ENCODE measurements at regions of chr2 and their contacts with region 1.

Region 1: GRCh38 chr2:26139269-26140183 is 33.4 kb upstream of the GAREM2 start:
- DNase-seq: peak in 1 of 2 experiments; percentile 44
- ATAC-seq: peak; percentile 28 to 42
- H3K4me3 ChIP-seq: no peak overlapping the region
- H3K27ac ChIP-seq: no peak overlapping the region; a peak in 1 of 6 replicates
- H3K4me1 ChIP-seq: peaks cover 14% of the 10 kb centered on the region
- CTCF ChIP-seq: no peak
- EP300 ChIP-seq: no peak
- POLR2A ChIP-seq: no peak
- RAD21 ChIP-seq: no peak

Region 2: DNA sequence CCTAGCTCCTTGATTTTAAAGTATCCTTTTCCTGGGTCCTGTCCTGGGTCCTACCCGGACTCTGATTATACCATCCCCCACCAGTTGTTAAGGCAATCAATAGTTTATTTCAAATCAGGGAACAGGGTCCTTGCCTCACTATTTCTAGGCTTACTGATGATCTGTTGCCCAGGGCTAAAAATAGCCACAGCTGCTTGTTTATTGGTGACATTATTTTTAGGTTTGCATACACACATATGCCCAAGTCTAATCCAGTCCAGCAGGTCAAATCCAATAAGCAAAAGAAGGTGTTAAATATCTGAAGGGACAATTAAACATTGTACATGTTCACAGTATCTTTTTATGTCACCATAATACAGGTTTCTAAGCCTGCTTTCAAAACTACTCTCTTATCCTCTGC is 39.6 kb before region 1 on chr2:
- CTCF ChIA-PET with region 1: interaction called, 12 read pairs
- POLR2A ChIA-PET with region 1: interaction called, 13 read pairs
- DNase-seq: no peak
- ATAC-seq: no peak
- H3K4me3 ChIP-seq: no peak overlapping the region
- H3K27ac ChIP-seq: no peak overlapping the region
- H3K4me1 ChIP-seq: peaks cover 23% of the 10 kb centered on the region
- CTCF ChIP-seq: no peak
- EP300 ChIP-seq: no peak
- POLR2A ChIP-seq: no peak
- RAD21 ChIP-seq: no peak

Measured in A549 (cell line).